H1 (cell line): ENCODE measurements at regions of chr12 and their contacts with region 1.

Region 1: GRCh38 chr12:48618541-48618940 is 48.7 kb upstream of the LALBA start:
- DNase-seq: peak; percentile 47 to 87
- H3K4me3 ChIP-seq: no peak overlapping the region
- H3K27ac ChIP-seq: no peak overlapping the region
- H3K4me1 ChIP-seq: no peaks in the 10 kb centered on the region
- H3K27me3 ChIP-seq: no peaks in the 10 kb centered on the region
- CTCF ChIP-seq: peak; percentile 80 to 98 (median 97)
- EP300 ChIP-seq: no peak
- POLR2A ChIP-seq: no peak
- RAD21 ChIP-seq: peak; percentile 100

Region 2: DNA sequence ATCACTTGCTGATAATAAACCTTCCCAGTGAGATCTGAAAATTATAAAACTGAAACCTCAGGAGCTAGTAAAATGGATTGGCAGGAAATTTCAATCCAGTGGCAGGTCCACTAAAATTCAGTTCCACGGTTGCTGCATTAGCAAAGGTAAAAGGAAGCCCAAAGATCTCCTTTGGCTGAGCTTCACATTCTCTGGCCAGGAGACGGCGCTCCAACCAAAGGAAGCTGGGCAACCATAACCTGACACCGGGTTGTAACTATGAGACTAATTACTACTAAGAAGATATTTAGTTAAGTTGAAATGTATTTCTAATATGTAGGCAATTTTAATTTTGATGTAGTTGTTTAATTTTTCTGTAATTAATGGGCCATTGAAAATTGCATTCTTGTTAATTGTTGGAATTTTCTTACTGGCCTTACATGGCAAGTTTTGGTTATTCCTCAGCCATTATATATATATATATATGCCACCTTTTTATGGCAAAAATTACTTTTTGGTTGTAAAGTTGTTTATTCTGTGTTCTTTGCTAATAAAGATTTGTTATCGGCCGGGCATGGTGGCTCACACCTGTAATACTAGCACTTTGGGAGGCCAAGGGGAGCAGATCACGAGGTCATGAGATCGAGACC is 76.1 kb before region 1 on chr12:
- CTCF ChIA-PET with region 1: interaction called, 388 read pairs
- POLR2A ChIA-PET with region 1: interaction called, 5 read pairs
- DNase-seq: peak; percentile 9 to 66
- H3K4me3 ChIP-seq: no peak overlapping the region
- H3K27ac ChIP-seq: no peak overlapping the region
- H3K4me1 ChIP-seq: no peaks in the 10 kb centered on the region
- H3K27me3 ChIP-seq: no peaks in the 10 kb centered on the region
- CTCF ChIP-seq: peak; percentile 69 to 93 (median 89)
- EP300 ChIP-seq: no peak
- POLR2A ChIP-seq: no peak
- RAD21 ChIP-seq: peak; percentile 97

Region 3: DNA sequence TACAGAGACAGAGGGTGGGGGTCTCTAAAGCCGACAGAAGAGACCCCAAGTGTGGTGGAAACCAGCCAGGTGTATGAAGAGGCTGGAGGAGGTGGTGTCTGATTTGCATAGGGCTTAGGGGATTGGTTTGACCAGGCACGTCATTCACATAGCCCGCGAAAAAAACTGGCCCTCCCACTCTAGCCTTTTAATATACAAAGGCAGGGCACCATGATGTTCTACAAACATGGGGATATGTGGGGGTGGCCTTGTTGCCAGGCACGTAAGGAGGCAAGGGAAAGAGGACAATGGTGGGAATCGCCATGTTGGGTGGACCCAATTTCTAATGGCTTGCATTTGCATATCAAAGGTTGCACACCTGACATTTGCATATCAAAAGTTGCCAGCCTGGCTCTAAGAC is 61.9 kb before region 1 on chr12:
- CTCF ChIA-PET with region 1: interaction called, 24 read pairs
- POLR2A ChIA-PET with region 1: no interaction called
- DNase-seq: no peak
- H3K4me3 ChIP-seq: no peak overlapping the region
- H3K27ac ChIP-seq: no peak overlapping the region
- H3K4me1 ChIP-seq: peaks cover 0 to 7% (median 2%) of the 10 kb centered on the region in 4 experiments; a peak in 1 of 7 replicates
- H3K27me3 ChIP-seq: no peaks in the 10 kb centered on the region
- CTCF ChIP-seq: no peak
- EP300 ChIP-seq: no peak
- POLR2A ChIP-seq: no peak
- RAD21 ChIP-seq: no peak

Region 4: GRCh38 chr12:48572326-48572725 is 46.2 kb before region 1 on chr12:
- CTCF ChIA-PET with region 1: interaction called, 22 read pairs
- POLR2A ChIA-PET with region 1: no interaction called
- DNase-seq: no peak
- H3K4me3 ChIP-seq: no peak overlapping the region
- H3K27ac ChIP-seq: no peak overlapping the region
- H3K4me1 ChIP-seq: no peaks in the 10 kb centered on the region
- H3K27me3 ChIP-seq: no peaks in the 10 kb centered on the region
- CTCF ChIP-seq: no peak
- EP300 ChIP-seq: no peak
- POLR2A ChIP-seq: no peak
- RAD21 ChIP-seq: no peak

Region 5: GRCh38 chr12:48601013-48601756 is 17.4 kb before region 1 on chr12:
- CTCF ChIA-PET with region 1: interaction called, 20 read pairs
- POLR2A ChIA-PET with region 1: no interaction called
- DNase-seq: peak; percentile 49 to 61
- H3K4me3 ChIP-seq: no peak overlapping the region
- H3K27ac ChIP-seq: peak overlapping the region; percentile 73
- H3K4me1 ChIP-seq: peaks cover 0 to 10% (median 3%) of the 10 kb centered on the region in 4 experiments; a peak in 3 of 7 replicates
- H3K27me3 ChIP-seq: no peaks in the 10 kb centered on the region
- CTCF ChIP-seq: no peak
- EP300 ChIP-seq: peak in 1 of 2 experiments; percentile 7; a peak in 1 of 3 replicates
- POLR2A ChIP-seq: no peak
- RAD21 ChIP-seq: no peak

Region 6: GRCh38 chr12:48629541-48629940 is 11.0 kb after region 1 on chr12:
- CTCF ChIA-PET with region 1: interaction called, 22 read pairs
- POLR2A ChIA-PET with region 1: no interaction called
- DNase-seq: no peak
- H3K4me3 ChIP-seq: no peak overlapping the region
- H3K27ac ChIP-seq: no peak overlapping the region
- H3K4me1 ChIP-seq: no peaks in the 10 kb centered on the region
- H3K27me3 ChIP-seq: no peaks in the 10 kb centered on the region
- CTCF ChIP-seq: no peak
- EP300 ChIP-seq: no peak
- POLR2A ChIP-seq: no peak
- RAD21 ChIP-seq: no peak

Region 7: DNA sequence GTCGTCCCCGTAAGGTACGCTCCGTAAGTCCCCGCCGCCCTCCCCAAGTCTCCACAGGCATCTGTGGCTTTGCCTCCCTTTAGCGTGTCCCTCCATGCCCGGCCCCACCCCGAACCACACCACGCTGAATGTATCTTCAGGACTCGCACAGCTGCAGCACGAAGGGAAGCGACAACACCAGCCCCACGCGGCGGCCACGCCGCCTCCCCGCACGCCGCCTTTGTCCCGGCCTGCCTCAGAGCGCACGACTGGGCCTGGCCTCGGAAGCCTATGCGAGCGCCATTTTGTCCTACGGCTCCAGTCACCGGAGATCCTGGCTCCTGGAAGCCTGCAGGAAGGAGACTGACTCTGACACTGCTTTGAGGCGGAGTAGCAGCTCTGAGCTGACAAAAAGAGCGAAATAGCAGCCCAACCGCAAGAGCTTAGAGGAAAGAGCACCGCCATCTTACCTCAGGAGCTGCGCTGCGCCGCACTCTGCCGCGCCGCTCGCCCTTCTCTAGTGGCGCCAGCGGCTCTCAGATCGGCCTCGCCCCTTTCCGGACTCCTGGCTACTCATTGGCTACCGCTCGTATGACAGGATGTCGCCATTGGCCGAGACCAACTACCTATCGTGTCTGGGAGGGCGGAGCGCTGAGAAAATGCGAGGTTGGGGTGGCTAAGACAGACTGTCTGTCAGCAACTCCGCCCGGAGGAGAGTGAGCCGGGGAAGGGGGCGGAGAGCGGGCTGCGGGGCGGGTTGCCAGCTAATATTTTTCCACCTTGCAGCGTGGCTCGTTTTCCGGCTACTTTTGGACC is 63.4 kb after region 1 on chr12 and contains the start of gene KANSL2:
- CTCF ChIA-PET with region 1: no interaction called
- POLR2A ChIA-PET with region 1: no interaction called
- DNase-seq: peak; percentile 88 to 91
- H3K4me3 ChIP-seq: peak within 1 kb of the TSS; percentile 80 to 92 (median 86)
- H3K27ac ChIP-seq: peak within 1 kb of the TSS; percentile 96
- H3K4me1 ChIP-seq: peaks cover 0 to 3% (median under 1%) of the 10 kb centered on the region in 4 experiments; a peak in 3 of 7 replicates
- H3K27me3 ChIP-seq: no peaks in the 10 kb centered on the region
- CTCF ChIP-seq: no peak
- EP300 ChIP-seq: no peak
- POLR2A ChIP-seq: peak; percentile 99
- RAD21 ChIP-seq: no peak
- total RNA-seq, gene KANSL2: 46.1 and 48.4 TPM in 2 replicates